MCF 10A (cell line): ENCODE measurements at regions of chr1 and their contacts with region 1.

Region 1: DNA sequence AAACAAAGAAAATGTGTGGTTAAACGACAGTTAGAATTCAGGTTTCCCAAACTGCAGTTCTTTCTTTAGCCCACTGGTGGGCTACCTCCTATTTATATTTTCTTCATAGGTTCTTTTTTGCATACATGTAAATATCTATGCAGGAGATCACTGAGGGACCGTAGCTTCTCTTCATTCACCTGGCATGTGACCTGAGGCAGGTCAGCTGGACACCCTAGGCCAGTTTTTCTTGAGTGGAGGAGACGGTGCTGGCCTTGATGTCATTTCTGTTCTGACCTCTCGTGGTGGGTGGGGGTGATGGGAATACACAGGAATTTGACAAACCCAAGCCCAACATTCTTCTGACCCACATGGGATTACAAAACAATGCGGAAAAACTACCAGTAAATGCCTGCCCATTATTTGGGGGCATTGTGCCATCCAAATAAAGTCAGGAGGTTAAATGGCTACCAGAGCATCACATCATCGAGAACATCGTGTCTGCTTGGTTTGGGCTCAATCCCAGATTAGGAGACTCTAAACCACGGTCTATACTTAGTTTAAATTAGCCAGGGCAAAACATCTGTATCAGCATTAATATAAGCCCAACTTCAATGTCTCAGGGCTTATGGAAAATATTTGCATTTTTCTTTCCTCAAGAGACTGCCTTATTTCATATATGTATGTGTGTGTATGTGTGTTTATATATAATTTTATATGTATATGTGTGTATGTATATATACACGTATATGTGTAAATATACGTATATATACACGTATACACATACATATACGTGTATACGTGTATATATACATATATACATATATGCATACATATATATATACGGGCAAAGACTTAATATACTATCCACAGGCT is 7.4 kb upstream of the IRF2BP2 start:
- DNase-seq: peak; percentile 80
- H3K4me3 Mint-ChIP-seq: no peak overlapping the region
- H3K27ac Mint-ChIP-seq: peak overlapping the region; percentile 99
- H3K4me1 Mint-ChIP-seq: peaks cover 70% of the 10 kb centered on the region
- H3K27me3 Mint-ChIP-seq: no peaks in the 10 kb centered on the region
- CTCF ChIP-seq: peak; percentile 28

Region 2: GRCh38 chr1:234645474-234645953 is 28.2 kb after region 1 on chr1:
- CTCF ChIA-PET with region 1: interaction called, 3 read pairs
- POLR2A ChIA-PET with region 1: interaction called, 61 read pairs
- intact Hi-C with region 1: no loop called
- DNase-seq: no peak
- H3K4me3 Mint-ChIP-seq: no peak overlapping the region
- H3K27ac Mint-ChIP-seq: no peak overlapping the region
- H3K4me1 Mint-ChIP-seq: peaks cover 16% of the 10 kb centered on the region
- H3K27me3 Mint-ChIP-seq: no peaks in the 10 kb centered on the region
- CTCF ChIP-seq: no peak